ENCODE measurements at regions of chr16 and their contacts with region 1.

Region 1: DNA sequence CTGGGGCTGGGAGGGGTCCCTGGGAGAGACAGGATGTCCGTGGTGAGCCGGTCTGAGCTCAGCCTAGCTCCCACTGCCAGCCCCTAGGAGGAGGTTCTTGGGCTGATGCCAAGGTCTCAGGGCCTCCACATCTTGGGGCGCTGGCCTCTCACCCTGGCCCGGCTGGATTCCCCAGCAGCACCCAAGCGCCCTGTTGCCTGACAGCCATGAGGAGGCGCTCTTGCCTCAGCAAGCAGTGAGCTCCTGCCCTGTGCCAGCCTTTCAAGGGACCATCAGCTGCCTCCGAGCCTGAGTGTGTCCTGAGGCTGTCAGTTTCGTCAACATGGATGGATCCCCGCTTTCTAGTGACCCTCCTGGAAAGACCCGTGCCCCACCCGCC is 234.9 kb upstream of the CIBAR2 start:
- DNase-seq: peak; percentile 63
- H3K4me3 ChIP-seq: no peak overlapping the region
- H3K27ac ChIP-seq: peak overlapping the region in 1 of 2 experiments; percentile 97; a peak in 1 of 4 replicates
- H3K4me1 ChIP-seq: peaks cover 13 to 60% of the 10 kb centered on the region in 2 experiments; a peak in 2 of 4 replicates
- H3K27me3 ChIP-seq: no peaks in the 10 kb centered on the region
- CTCF ChIP-seq: peak; percentile 45
- EP300 ChIP-seq: no peak
- RAD21 ChIP-seq: peak; percentile 73

Region 2: GRCh38 chr16:85286970-85287824 is 60.0 kb before region 1 on chr16:
- CTCF ChIA-PET with region 1: interaction called, 10 read pairs
- POLR2A ChIA-PET with region 1: no interaction called
- DNase-seq: peak; percentile 93
- H3K4me3 ChIP-seq: no peak overlapping the region
- H3K27ac ChIP-seq: peak overlapping the region; percentile 22 to 92; a peak in 3 of 4 replicates
- H3K4me1 ChIP-seq: peaks cover 10 to 71% of the 10 kb centered on the region in 2 experiments; a peak in 3 of 4 replicates
- H3K27me3 ChIP-seq: no peaks in the 10 kb centered on the region
- CTCF ChIP-seq: no peak
- EP300 ChIP-seq: peak in 1 of 2 experiments; percentile 81; a peak in 2 of 4 replicates
- RAD21 ChIP-seq: peak; percentile 36

Region 3: DNA sequence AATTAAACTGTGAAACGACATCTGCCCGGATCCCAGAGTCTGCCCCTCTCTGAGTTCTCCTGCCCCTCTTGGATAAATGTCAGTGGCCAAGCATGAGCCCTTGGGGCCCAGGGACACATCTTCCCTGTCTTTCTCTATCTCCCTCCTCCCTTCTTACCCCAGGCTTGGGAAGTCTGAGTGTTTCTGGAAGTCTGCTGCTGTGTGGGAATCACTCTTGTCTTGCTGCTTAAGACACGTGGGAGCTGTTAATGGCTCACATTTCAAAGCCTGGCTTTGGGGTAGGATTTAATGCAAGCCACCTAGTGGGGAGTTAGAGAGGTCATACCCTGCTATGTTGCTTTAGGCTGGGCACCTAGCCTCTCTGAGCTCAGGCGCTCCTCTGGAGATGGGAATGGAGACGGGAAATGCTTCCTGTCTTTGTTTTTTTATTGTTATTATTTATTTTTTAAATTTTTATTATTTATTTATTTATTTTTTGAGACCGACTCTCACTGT is 16.5 kb before region 1 on chr16:
- CTCF ChIA-PET with region 1: interaction called, 12 read pairs
- POLR2A ChIA-PET with region 1: no interaction called
- DNase-seq: peak; percentile 80
- H3K4me3 ChIP-seq: no peak overlapping the region
- H3K27ac ChIP-seq: peak overlapping the region in 1 of 2 experiments; percentile 85; a peak in 2 of 4 replicates
- H3K4me1 ChIP-seq: peaks cover 12 to 43% of the 10 kb centered on the region in 2 experiments; a peak in 2 of 4 replicates
- H3K27me3 ChIP-seq: no peaks in the 10 kb centered on the region
- CTCF ChIP-seq: peak; percentile 61
- EP300 ChIP-seq: no peak
- RAD21 ChIP-seq: peak; percentile 52

Region 4: GRCh38 chr16:85369741-85370528 is 22.7 kb after region 1 on chr16:
- CTCF ChIA-PET with region 1: interaction called, 37 read pairs
- POLR2A ChIA-PET with region 1: interaction called, 11 read pairs
- DNase-seq: peak; percentile 84
- H3K4me3 ChIP-seq: no peak overlapping the region
- H3K27ac ChIP-seq: peak overlapping the region; percentile 50 to 95; a peak in 3 of 4 replicates
- H3K4me1 ChIP-seq: peaks cover 25 to 90% of the 10 kb centered on the region in 2 experiments
- H3K27me3 ChIP-seq: no peaks in the 10 kb centered on the region
- CTCF ChIP-seq: peak; percentile 87
- EP300 ChIP-seq: no peak
- RAD21 ChIP-seq: peak; percentile 71

Region 5: DNA sequence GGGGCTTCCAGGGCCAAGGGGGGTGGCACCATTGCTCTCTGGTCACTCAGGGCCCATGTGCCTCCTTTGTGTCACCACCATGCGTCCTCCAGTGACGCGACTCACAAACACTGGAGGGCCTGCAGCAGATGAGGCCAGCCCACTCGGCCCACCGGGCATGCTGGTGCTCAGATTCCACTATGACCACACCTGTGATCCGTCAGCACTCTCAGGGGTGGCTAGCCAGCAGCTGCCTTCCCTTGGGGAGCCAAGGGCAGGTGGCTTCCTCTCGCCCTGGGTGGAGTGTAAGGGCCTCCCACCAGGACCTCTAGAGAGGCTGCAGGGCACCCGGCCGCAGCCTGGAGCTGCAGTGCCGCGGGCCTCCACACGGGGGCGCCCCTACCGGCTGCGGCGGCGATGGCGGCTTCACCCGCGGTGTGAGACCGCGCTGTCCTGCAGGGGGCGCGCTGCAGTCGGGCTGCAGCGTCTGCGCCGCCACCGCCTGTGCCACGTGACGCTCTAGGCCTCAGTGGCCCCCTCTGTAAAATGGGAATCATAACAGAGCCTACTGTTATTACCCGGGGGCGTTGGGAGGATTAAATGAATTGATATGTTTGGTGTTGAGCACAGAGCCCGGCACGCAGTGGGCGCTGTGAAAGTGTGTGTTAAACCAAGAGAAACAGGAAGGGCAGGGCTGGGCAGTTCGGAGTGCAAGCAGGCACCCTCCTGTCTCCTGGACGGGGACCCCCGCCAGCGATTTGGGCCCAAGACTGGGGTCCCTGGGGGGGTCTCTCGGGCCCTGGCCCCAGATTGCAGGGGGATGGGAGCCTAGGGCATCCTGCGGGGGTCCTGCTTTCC is 73.5 kb after region 1 on chr16:
- CTCF ChIA-PET with region 1: interaction called, 16 read pairs
- POLR2A ChIA-PET with region 1: no interaction called
- DNase-seq: peak; percentile 85
- H3K4me3 ChIP-seq: peak overlapping the region in 1 of 2 experiments; percentile 32; a peak in 1 of 4 replicates
- H3K27ac ChIP-seq: no peak overlapping the region
- H3K4me1 ChIP-seq: peaks cover 0 to 61% of the 10 kb centered on the region in 2 experiments; a peak in 3 of 4 replicates
- H3K27me3 ChIP-seq: no peaks in the 10 kb centered on the region
- CTCF ChIP-seq: peak; percentile 76
- EP300 ChIP-seq: no peak
- RAD21 ChIP-seq: peak; percentile 39

Region 6: GRCh38 chr16:86834451-86835035 is 1487.3 kb after region 1 on chr16:
- CTCF ChIA-PET with region 1: no interaction called
- POLR2A ChIA-PET with region 1: no interaction called
- DNase-seq: no peak
- H3K4me3 ChIP-seq: no peak overlapping the region
- H3K27ac ChIP-seq: no peak overlapping the region
- H3K4me1 ChIP-seq: peaks cover 0 to 4% of the 10 kb centered on the region in 2 experiments; a peak in 2 of 4 replicates
- H3K27me3 ChIP-seq: peaks cover 22% of the 10 kb centered on the region; the same call in 1 of the 2 replicates
- CTCF ChIP-seq: peak; percentile 52
- EP300 ChIP-seq: no peak
- RAD21 ChIP-seq: peak; percentile 6; the same call in 1 of the 2 replicates